Calu3 (cell line): ENCODE measurements at regions of chr10 and their contacts with region 1.

Region 1: GRCh38 chr10:99685597-99685967 is 26.3 kb downstream of the ENTPD7 start:
- DNase-seq: no peak
- H3K4me3 Mint-ChIP-seq: no peak overlapping the region
- H3K27ac Mint-ChIP-seq: peak overlapping the region; percentile 7
- H3K4me1 Mint-ChIP-seq: no peaks in the 10 kb centered on the region
- H3K27me3 Mint-ChIP-seq: no peaks in the 10 kb centered on the region
- CTCF ChIP-seq: no peak

Region 2: GRCh38 chr10:99395750-99396445 is 289.7 kb before region 1 on chr10:
- CTCF ChIA-PET with region 1: no interaction called
- intact Hi-C with region 1: loop called (anchors 10 kb)
- DNase-seq: no peak
- H3K4me3 Mint-ChIP-seq: peak overlapping the region; percentile 12
- H3K27ac Mint-ChIP-seq: peak overlapping the region; percentile 54
- H3K4me1 Mint-ChIP-seq: peaks cover 11% of the 10 kb centered on the region
- H3K27me3 Mint-ChIP-seq: no peaks in the 10 kb centered on the region
- CTCF ChIP-seq: no peak

Region 3: GRCh38 chr10:99630439-99630838 is 55.1 kb before region 1 on chr10:
- CTCF ChIA-PET with region 1: no interaction called
- intact Hi-C with region 1: loop called (anchors 2 kb)
- DNase-seq: peak; percentile 24
- H3K4me3 Mint-ChIP-seq: no peak overlapping the region
- H3K27ac Mint-ChIP-seq: no peak overlapping the region
- H3K4me1 Mint-ChIP-seq: no peaks in the 10 kb centered on the region
- H3K27me3 Mint-ChIP-seq: peaks cover 13% of the 10 kb centered on the region
- CTCF ChIP-seq: no peak